ENCODE measurements at regions of chr3 and their contacts with region 1.

Region 1: GRCh38 chr3:127177231-127177630 is 15.7 kb upstream of the PRR23E start:
- DNase-seq: no peak
- ATAC-seq: no peak
- H3K4me3 ChIP-seq: no peak overlapping the region
- H3K4me3 Mint-ChIP-seq: no peak overlapping the region
- H3K27ac ChIP-seq: no peak overlapping the region
- H3K27ac Mint-ChIP-seq: no peak overlapping the region
- H3K4me1 ChIP-seq: no peaks in the 10 kb centered on the region
- H3K4me1 Mint-ChIP-seq: no peaks in the 10 kb centered on the region
- H3K27me3 ChIP-seq: peaks cover 0 to 12% (median 0%) of the 10 kb centered on the region in 4 experiments
- H3K27me3 Mint-ChIP-seq: peaks cover 16% of the 10 kb centered on the region
- CTCF ChIP-seq: no peak

Region 2: DNA sequence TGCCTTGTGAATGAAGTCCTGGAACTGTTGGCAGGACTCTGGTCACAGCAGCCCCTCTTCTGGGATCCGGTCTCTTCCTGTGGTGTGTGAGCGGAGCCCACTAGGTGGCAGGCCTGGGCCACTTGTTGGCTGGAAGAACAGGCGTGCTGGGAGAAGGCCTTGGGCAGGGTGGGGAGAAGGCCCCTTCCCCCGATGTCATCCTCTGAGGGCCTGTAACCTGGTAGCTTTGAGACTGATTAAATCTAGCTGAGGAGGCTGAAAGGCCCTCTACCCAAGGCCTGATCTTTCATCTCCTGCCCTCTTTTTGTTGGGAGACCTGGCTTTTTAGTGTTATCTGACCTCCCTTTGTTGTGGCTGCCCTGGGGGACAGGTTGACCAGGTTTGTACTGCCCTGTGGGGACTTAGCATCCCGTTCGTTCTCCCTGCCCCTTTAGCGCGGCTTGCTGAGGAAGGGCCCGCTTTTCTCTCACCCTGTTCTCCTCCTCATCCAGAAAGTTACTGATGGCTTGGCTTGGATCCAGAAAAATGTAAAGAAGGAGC is 424.9 kb before region 1 on chr3:
- CTCF ChIA-PET with region 1: no interaction called
- POLR2A ChIA-PET with region 1: no interaction called
- intact Hi-C with region 1: loop called (anchors 5 kb)
- DNase-seq: peak; percentile 63
- ATAC-seq: peak; percentile 82
- H3K4me3 ChIP-seq: no peak overlapping the region
- H3K4me3 Mint-ChIP-seq: no peak overlapping the region
- H3K27ac ChIP-seq: no peak overlapping the region
- H3K27ac Mint-ChIP-seq: no peak overlapping the region
- H3K4me1 ChIP-seq: no peaks in the 10 kb centered on the region
- H3K4me1 Mint-ChIP-seq: no peaks in the 10 kb centered on the region
- H3K27me3 ChIP-seq: no peaks in the 10 kb centered on the region
- H3K27me3 Mint-ChIP-seq: no peaks in the 10 kb centered on the region
- CTCF ChIP-seq: peak; percentile 76

Measured in B cell (primary cell).